ENCODE measurements at regions of chr15 and their contacts with region 1.

Region 1: DNA sequence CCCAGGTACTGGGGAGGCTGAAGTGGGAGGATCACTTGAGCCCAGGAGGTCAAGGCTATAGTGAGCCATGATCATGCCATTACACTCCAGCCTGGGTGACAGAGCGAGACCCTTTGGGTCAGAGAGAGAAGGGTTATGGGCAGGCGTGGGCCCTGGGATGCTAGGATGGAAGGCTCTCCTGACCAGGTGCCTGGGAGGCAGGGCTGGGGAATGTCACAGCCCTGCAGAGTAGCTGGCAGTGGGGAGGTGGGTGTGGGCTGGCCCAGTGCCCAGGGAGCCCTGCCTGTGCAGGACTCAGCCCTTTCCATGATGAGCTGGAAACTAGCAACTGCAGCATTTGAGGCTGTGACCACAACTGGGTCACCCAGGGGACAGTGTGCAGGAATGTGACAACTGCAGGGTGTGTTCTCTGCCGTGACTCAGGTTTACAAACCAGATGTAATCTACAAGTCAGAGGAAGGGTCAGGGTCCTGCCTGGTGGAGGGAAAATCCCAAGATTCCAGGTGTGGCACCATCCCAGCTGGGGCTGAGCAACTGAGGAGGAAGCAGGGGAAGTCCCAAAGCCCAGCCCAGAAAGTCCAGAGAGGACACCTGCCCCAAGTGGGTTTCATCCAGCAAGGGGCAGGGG is 45.4 kb downstream of the SLC28A1 start:
- DNase-seq: peak; percentile 44
- ATAC-seq: peak; percentile 40
- H3K4me3 Mint-ChIP-seq: no peak overlapping the region
- H3K27ac Mint-ChIP-seq: no peak overlapping the region
- H3K4me1 Mint-ChIP-seq: peaks cover 5% of the 10 kb centered on the region
- H3K27me3 Mint-ChIP-seq: no peaks in the 10 kb centered on the region

Region 2: GRCh38 chr15:84844964-84845363 is 84.9 kb before region 1 on chr15:
- CTCF ChIA-PET with region 1: interaction called, 5 read pairs
- POLR2A ChIA-PET with region 1: no interaction called
- intact Hi-C with region 1: loop called (anchors 1 kb)
- DNase-seq: no peak
- ATAC-seq: no peak
- H3K4me3 Mint-ChIP-seq: no peak overlapping the region
- H3K27ac Mint-ChIP-seq: no peak overlapping the region
- H3K4me1 Mint-ChIP-seq: no peaks in the 10 kb centered on the region
- H3K27me3 Mint-ChIP-seq: no peaks in the 10 kb centered on the region

Region 3: GRCh38 chr15:84874981-84875699 is 54.7 kb before region 1 on chr15:
- CTCF ChIA-PET with region 1: interaction called, 4 read pairs
- POLR2A ChIA-PET with region 1: no interaction called
- intact Hi-C with region 1: loop called (anchors 1 to 2 kb)
- DNase-seq: no peak
- ATAC-seq: no peak
- H3K4me3 Mint-ChIP-seq: no peak overlapping the region
- H3K27ac Mint-ChIP-seq: no peak overlapping the region
- H3K4me1 Mint-ChIP-seq: no peaks in the 10 kb centered on the region
- H3K27me3 Mint-ChIP-seq: no peaks in the 10 kb centered on the region

Region 4: DNA sequence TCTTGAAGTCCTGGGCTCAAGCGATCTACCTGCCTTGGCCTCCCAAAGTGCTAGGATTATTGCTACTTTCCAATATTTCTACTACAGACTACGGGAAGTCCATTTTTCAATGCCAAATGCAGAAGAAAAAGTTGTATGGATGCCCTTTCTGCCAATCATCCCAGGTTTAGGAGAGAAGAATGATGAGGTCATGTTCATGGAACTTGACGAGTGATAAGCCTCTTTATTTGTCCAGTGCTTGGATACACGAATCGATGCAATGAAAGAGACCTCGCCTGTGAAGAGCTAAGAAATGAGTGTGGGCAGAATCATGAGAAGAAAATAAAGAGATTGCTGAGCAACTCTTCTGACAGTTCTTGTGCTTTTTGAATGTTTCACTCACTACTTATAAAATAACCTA is 46.4 kb before region 1 on chr15:
- CTCF ChIA-PET with region 1: interaction called, 4 read pairs
- POLR2A ChIA-PET with region 1: no interaction called
- intact Hi-C with region 1: loop called (anchors 1 to 2 kb)
- DNase-seq: no peak
- ATAC-seq: no peak
- H3K4me3 Mint-ChIP-seq: no peak overlapping the region
- H3K27ac Mint-ChIP-seq: no peak overlapping the region
- H3K4me1 Mint-ChIP-seq: no peaks in the 10 kb centered on the region
- H3K27me3 Mint-ChIP-seq: no peaks in the 10 kb centered on the region

Region 5: GRCh38 chr15:85044251-85044853 is 114.5 kb after region 1 on chr15:
- CTCF ChIA-PET with region 1: interaction called, 11 read pairs
- POLR2A ChIA-PET with region 1: no interaction called
- intact Hi-C with region 1: no loop called
- DNase-seq: peak; percentile 68
- ATAC-seq: peak; percentile 57
- H3K4me3 Mint-ChIP-seq: no peak overlapping the region
- H3K27ac Mint-ChIP-seq: no peak overlapping the region
- H3K4me1 Mint-ChIP-seq: peaks cover 13% of the 10 kb centered on the region
- H3K27me3 Mint-ChIP-seq: no peaks in the 10 kb centered on the region

Region 6: GRCh38 chr15:85100186-85100937 is 170.5 kb after region 1 on chr15:
- CTCF ChIA-PET with region 1: no interaction called
- POLR2A ChIA-PET with region 1: no interaction called
- intact Hi-C with region 1: no loop called
- DNase-seq: peak; percentile 9
- ATAC-seq: no peak
- H3K4me3 Mint-ChIP-seq: no peak overlapping the region
- H3K27ac Mint-ChIP-seq: no peak overlapping the region
- H3K4me1 Mint-ChIP-seq: peaks cover 3% of the 10 kb centered on the region
- H3K27me3 Mint-ChIP-seq: no peaks in the 10 kb centered on the region